Activated naive CD4-positive, alpha-beta T cell treated with anti-CD3 and anti-CD28 coated beads for 36 hours (primary cell): ENCODE measurements at regions of chr12 and their contacts with region 1.

Region 1: GRCh38 chr12:15590180-15590826 is 198.9 kb downstream of the EPS8 start:
- DNase-seq: peak; percentile 63
- H3K4me3 Mint-ChIP-seq: peak overlapping the region; percentile 71
- H3K27ac Mint-ChIP-seq: peak overlapping the region; percentile 8
- H3K4me1 Mint-ChIP-seq: peaks cover 8% of the 10 kb centered on the region
- H3K27me3 Mint-ChIP-seq: no peaks in the 10 kb centered on the region

Region 2: DNA sequence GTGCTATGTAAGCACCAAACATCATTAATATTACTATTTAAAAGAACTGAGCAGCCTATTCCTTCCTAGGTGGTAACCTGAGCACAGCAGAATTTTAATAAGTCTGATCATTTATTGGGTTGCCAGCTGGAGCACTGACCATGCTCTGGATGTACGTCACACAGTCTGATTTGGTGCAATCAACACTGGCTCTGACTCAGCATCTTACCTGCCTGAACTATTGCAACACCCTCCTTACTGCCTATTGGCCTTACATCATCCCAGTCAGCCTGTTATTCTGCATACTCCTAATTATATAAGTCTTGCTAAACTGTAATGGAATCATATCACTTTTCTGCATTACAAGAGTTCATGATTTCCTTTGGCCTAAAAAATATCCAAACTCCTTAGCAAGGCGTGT is 118.3 kb before region 1 on chr12:
- CTCF ChIA-PET with region 1: no interaction called
- intact Hi-C with region 1: no loop called
- DNase-seq: no peak
- H3K4me3 Mint-ChIP-seq: no peak overlapping the region
- H3K27ac Mint-ChIP-seq: no peak overlapping the region
- H3K4me1 Mint-ChIP-seq: no peaks in the 10 kb centered on the region
- H3K27me3 Mint-ChIP-seq: peaks cover 4% of the 10 kb centered on the region

Region 3: GRCh38 chr12:15522565-15523187 is 67.6 kb before region 1 on chr12:
- CTCF ChIA-PET with region 1: interaction called, 460 read pairs
- intact Hi-C with region 1: no loop called
- DNase-seq: no peak
- H3K4me3 Mint-ChIP-seq: no peak overlapping the region
- H3K27ac Mint-ChIP-seq: no peak overlapping the region
- H3K4me1 Mint-ChIP-seq: peaks cover 4% of the 10 kb centered on the region
- H3K27me3 Mint-ChIP-seq: peaks cover 14% of the 10 kb centered on the region

Region 4: DNA sequence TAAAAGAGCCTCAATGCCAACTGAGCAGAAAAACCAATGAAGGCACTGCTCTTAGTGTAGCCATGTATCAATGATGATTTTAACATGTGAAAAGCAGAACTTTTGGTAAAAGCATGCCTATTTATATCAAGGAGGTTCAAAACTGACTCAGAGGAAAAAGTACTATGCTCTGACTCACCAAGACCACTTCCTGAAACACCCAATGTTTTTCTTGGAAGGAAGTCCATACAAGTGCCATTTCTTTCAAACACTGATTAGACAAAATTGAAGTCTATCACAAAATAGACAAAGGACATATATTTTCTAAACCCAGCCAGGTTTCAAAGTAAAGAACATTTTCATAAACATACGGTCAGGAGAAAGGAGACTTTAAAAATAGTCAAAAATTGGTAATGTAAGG is 110.3 kb after region 1 on chr12:
- CTCF ChIA-PET with region 1: no interaction called
- intact Hi-C with region 1: loop called (anchors 5 kb)
- DNase-seq: peak; percentile 45
- H3K4me3 Mint-ChIP-seq: no peak overlapping the region
- H3K27ac Mint-ChIP-seq: peak overlapping the region; percentile 35
- H3K4me1 Mint-ChIP-seq: peaks cover 27% of the 10 kb centered on the region
- H3K27me3 Mint-ChIP-seq: peaks cover 3% of the 10 kb centered on the region

Region 5: GRCh38 chr12:15789220-15790171 is 199.2 kb after region 1 on chr12 and contains the start of gene EPS8:
- CTCF ChIA-PET with region 1: interaction called, 10 read pairs
- intact Hi-C with region 1: loop called (anchors 1 kb)
- DNase-seq: peak; percentile 88
- H3K4me3 Mint-ChIP-seq: peak within 1 kb of the TSS; percentile 82
- H3K27ac Mint-ChIP-seq: no peak within 1 kb of the TSS
- H3K4me1 Mint-ChIP-seq: peaks cover 15% of the 10 kb centered on the region
- H3K27me3 Mint-ChIP-seq: peaks cover 49% of the 10 kb centered on the region
- total RNA-seq, gene EPS8: 3.2 to 5.6 TPM

Region 6: DNA sequence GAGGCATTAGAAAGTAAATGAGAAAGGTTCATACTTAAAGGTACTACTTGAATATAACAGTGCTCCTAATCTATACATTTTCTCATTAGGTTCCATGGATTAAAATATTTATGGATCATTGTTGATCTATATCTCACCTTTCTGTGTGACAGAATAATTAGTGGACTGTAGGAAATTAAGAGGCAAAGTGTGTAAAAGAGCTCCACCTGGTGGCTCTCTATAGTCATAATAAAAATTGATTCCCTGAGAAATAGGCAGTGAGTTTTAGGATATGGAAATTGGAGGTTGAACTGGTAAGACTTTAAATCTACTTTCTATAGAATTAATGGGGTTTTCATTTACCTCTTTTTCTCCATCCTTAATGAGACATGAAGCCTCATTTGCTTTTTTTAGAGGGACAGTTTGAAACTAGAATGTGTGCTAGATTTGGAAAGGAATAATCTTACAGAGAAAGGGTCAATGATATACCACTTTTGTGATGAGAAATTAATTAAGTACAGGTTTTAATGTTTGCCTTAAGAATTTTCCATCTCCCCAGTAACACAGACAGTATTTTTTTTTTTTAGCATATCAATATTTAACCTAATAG is 309.1 kb after region 1 on chr12:
- CTCF ChIA-PET with region 1: interaction called, 3 read pairs
- intact Hi-C with region 1: loop called (anchors 1 kb)
- DNase-seq: no peak
- H3K4me3 Mint-ChIP-seq: no peak overlapping the region
- H3K27ac Mint-ChIP-seq: no peak overlapping the region
- H3K4me1 Mint-ChIP-seq: peaks cover 4% of the 10 kb centered on the region
- H3K27me3 Mint-ChIP-seq: no peaks in the 10 kb centered on the region